ENCODE measurements at regions of chr18 and their contacts with region 1.

Region 1: DNA sequence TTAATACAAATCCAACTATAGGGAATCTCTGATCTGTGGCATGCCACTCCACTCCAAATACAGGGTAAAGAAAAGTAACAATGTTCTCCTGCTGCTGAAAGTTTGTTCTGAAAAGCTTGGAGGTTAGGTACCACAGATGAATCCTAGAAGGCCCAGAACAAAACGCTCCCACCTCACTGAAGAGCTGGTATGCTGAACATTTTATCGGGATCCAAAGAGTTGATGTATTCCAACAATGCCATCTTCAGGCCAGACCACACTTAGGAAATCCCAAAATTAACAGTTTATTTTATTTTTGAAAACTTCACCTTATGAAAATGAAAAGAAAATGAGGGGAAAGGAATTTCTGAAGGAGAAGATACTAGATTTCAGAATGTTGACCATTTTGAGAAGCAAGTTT is 145.1 kb upstream of the CDH19 start:
- DNase-seq: no peak
- ATAC-seq: no peak
- H3K4me3 ChIP-seq: no peak overlapping the region
- H3K27ac ChIP-seq: no peak overlapping the region
- H3K4me1 ChIP-seq: no peaks in the 10 kb centered on the region
- H3K27me3 ChIP-seq: no peaks in the 10 kb centered on the region
- CTCF ChIP-seq: no peak
- POLR2A ChIP-seq: no peak

Region 2: GRCh38 chr18:66560092-66560491 is 188.9 kb before region 1 on chr18:
- in situ Hi-C with region 1: loop called in 1 of 4 experiments (anchors 10 kb)
- intact Hi-C with region 1: no loop called
- DNase-seq: no peak
- ATAC-seq: no peak
- H3K4me3 ChIP-seq: no peak overlapping the region
- H3K27ac ChIP-seq: no peak overlapping the region
- H3K4me1 ChIP-seq: no peaks in the 10 kb centered on the region
- H3K27me3 ChIP-seq: no peaks in the 10 kb centered on the region
- CTCF ChIP-seq: peak in 1 of 5 experiments; percentile 13
- POLR2A ChIP-seq: no peak

Region 3: DNA sequence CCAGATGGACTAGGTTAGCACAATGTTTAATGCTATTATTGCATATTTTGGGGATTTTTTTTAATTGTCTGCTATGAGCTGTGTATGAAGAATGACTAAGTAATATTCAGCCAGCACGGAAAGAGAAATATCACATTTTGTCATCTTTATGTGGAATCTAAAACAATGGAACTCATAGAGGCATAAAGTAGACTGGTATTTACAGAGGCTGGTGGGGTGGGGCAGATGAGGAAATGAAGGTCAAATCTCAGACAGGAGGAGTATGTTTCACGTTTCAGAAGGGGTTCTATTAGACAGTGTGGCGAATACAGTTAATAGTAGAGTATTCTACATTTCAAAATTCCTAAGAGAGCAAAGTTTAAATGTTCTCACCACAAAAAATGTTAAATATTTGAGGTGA is 149.8 kb before region 1 on chr18:
- in situ Hi-C with region 1: no loop called
- intact Hi-C with region 1: no loop called
- DNase-seq: no peak
- ATAC-seq: no peak
- H3K4me3 ChIP-seq: no peak overlapping the region
- H3K27ac ChIP-seq: no peak overlapping the region
- H3K4me1 ChIP-seq: no peaks in the 10 kb centered on the region
- H3K27me3 ChIP-seq: no peaks in the 10 kb centered on the region
- CTCF ChIP-seq: no peak
- POLR2A ChIP-seq: no peak

Measured in gastrocnemius medialis (tissue), 4 donors.